Dendritic cell treated with granulocyte-macrophage colony-stimulating factor and Interleukin-4, amounts not matched to agents 40 ng/mL and 50 ng/mL, for 4 days (primary cell): ENCODE measurements at regions of chr7 and their contacts with region 1.

Region 1: DNA sequence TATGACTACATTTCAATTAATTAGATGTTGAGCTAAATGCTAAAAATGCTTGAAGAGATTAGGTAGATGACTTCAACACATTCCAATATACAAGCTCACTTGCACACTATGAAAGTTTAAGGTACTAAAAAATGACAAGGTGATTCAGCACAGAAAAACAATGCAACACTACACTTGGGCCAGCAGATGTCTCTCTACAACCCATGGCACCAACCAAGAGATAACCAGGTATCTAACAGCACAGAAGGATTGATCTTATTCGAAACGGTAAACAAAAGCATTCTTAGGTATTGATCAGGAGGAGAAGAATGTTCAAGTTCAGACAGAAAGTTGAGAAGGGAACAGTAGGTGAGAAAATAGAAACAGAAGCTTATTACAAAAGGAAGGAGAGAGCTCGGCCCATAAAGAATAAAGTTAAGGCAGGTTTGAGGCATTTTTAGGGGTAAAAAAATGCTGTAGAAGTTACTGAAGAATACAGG is 248.2 kb upstream of the KLF14 start:
- H3K4me3 Mint-ChIP-seq: no peak overlapping the region
- H3K27ac Mint-ChIP-seq: no peak overlapping the region
- H3K4me1 Mint-ChIP-seq: peaks cover 10% of the 10 kb centered on the region
- H3K27me3 Mint-ChIP-seq: no peaks in the 10 kb centered on the region

Region 2: GRCh38 chr7:131040467-131040932 is 58.3 kb after region 1 on chr7:
- intact Hi-C with region 1: loop called (anchors 5 kb)
- H3K4me3 Mint-ChIP-seq: peak overlapping the region; percentile 46
- H3K27ac Mint-ChIP-seq: no peak overlapping the region
- H3K4me1 Mint-ChIP-seq: peaks cover 29% of the 10 kb centered on the region
- H3K27me3 Mint-ChIP-seq: no peaks in the 10 kb centered on the region